T-cell (primary cell): ENCODE measurements at regions of chr7 and their contacts with region 1.

Region 1: GRCh38 chr7:78062214-78062613 is 263.6 kb downstream of the PHTF2 start:
- DNase-seq: no peak
- ATAC-seq: no peak
- H3K4me3 ChIP-seq: no peak overlapping the region
- H3K4me3 Mint-ChIP-seq: no peak overlapping the region
- H3K27ac ChIP-seq: no peak overlapping the region
- H3K27ac Mint-ChIP-seq: no peak overlapping the region
- H3K4me1 ChIP-seq: no peaks in the 10 kb centered on the region
- H3K4me1 Mint-ChIP-seq: no peaks in the 10 kb centered on the region
- H3K27me3 ChIP-seq: peaks cover 0 to 7% of the 10 kb centered on the region in 2 experiments
- H3K27me3 Mint-ChIP-seq: peaks cover 26 to 35% of the 10 kb centered on the region in 2 donors

Region 2: GRCh38 chr7:77359599-77359998 is 702.6 kb before region 1 on chr7:
- CTCF ChIA-PET with region 1: no interaction called
- POLR2A ChIA-PET with region 1: interaction called in 1 of 2 experiments, 11 read pairs
- DNase-seq: no peak
- ATAC-seq: no peak
- H3K4me3 ChIP-seq: no peak overlapping the region
- H3K4me3 Mint-ChIP-seq: no peak overlapping the region
- H3K27ac ChIP-seq: no peak overlapping the region
- H3K27ac Mint-ChIP-seq: no peak overlapping the region
- H3K4me1 ChIP-seq: peaks cover 8 to 11% of the 10 kb centered on the region in 2 experiments
- H3K4me1 Mint-ChIP-seq: peaks cover 15 to 32% (median 22%) of the 10 kb centered on the region in 3 donors
- H3K27me3 ChIP-seq: no peaks in the 10 kb centered on the region
- H3K27me3 Mint-ChIP-seq: no peaks in the 10 kb centered on the region

Region 3: DNA sequence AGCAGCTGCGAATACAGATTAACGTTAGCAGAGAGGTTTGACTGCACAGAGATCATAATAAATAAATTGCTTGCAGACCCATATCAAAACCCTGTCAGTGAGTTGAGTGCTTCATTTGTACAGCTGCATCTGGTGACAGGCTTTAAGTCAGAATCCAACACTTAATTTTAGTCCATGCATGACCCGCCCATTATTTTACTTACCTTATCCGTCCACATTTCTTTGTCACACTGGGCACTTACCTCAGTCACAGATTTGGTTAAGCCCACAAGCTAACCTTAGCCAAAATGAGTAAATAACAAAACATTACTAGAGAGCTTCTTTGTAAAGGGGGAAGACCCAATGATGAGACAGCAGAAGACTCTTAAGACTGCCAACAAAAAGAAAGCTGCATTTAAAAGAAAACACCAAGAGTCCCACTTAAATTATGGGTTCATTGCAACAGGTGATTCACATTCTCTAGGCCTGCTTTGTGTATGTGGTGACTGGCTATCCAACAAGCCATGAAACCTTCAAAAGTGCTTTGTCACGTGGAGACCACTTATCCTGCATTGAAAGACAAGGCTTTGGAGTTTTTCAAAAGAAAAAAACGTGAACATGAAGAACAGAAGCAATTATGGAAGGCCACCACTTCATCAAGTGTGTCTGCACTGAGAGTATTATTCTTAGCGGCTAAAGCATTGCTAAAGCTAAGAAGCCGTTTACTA is 231.4 kb before region 1 on chr7:
- CTCF ChIA-PET with region 1: no interaction called
- POLR2A ChIA-PET with region 1: no interaction called
- DNase-seq: no peak
- ATAC-seq: no peak
- H3K4me3 ChIP-seq: no peak overlapping the region
- H3K4me3 Mint-ChIP-seq: peak overlapping the region in 1 of 3 donors; percentile 66
- H3K27ac ChIP-seq: no peak overlapping the region
- H3K27ac Mint-ChIP-seq: peak overlapping the region; percentile 59 to 63
- H3K4me1 ChIP-seq: peaks cover 7 to 9% of the 10 kb centered on the region in 2 experiments
- H3K4me1 Mint-ChIP-seq: peaks cover 54 to 68% (median 62%) of the 10 kb centered on the region in 3 donors
- H3K27me3 ChIP-seq: no peaks in the 10 kb centered on the region
- H3K27me3 Mint-ChIP-seq: no peaks in the 10 kb centered on the region

Region 4: GRCh38 chr7:78052112-78052511 is 10.1 kb before region 1 on chr7:
- CTCF ChIA-PET with region 1: interaction called in 1 of 2 experiments, 10 read pairs
- POLR2A ChIA-PET with region 1: no interaction called
- DNase-seq: no peak
- ATAC-seq: no peak
- H3K4me3 ChIP-seq: no peak overlapping the region
- H3K4me3 Mint-ChIP-seq: no peak overlapping the region
- H3K27ac ChIP-seq: no peak overlapping the region
- H3K27ac Mint-ChIP-seq: no peak overlapping the region
- H3K4me1 ChIP-seq: no peaks in the 10 kb centered on the region
- H3K4me1 Mint-ChIP-seq: no peaks in the 10 kb centered on the region
- H3K27me3 ChIP-seq: no peaks in the 10 kb centered on the region
- H3K27me3 Mint-ChIP-seq: peaks cover 3 to 6% of the 10 kb centered on the region in 2 donors